ENCODE measurements at regions of chr2 and their contacts with region 1.

Region 1: GRCh38 chr2:64523666-64524603 is at the start of gene AFTPH:
- DNase-seq: peak; percentile 97
- H3K4me3 ChIP-seq: peak within 1 kb of the TSS; percentile 91
- H3K27ac ChIP-seq: peak within 1 kb of the TSS; percentile 81
- H3K27me3 ChIP-seq: peaks cover 12% of the 10 kb centered on the region
- CTCF ChIP-seq: no peak
- polyA plus RNA-seq, gene AFTPH: 16.8 and 22.0 TPM in 2 replicates

Region 2: GRCh38 chr2:64538764-64539433 is 15.0 kb after region 1 on chr2:
- CTCF ChIA-PET with region 1: interaction called, 18 read pairs
- POLR2A ChIA-PET with region 1: interaction called, 3 read pairs
- DNase-seq: no peak
- H3K4me3 ChIP-seq: no peak overlapping the region
- H3K27ac ChIP-seq: no peak overlapping the region
- H3K27me3 ChIP-seq: no peaks in the 10 kb centered on the region
- CTCF ChIP-seq: no peak

Region 3: DNA sequence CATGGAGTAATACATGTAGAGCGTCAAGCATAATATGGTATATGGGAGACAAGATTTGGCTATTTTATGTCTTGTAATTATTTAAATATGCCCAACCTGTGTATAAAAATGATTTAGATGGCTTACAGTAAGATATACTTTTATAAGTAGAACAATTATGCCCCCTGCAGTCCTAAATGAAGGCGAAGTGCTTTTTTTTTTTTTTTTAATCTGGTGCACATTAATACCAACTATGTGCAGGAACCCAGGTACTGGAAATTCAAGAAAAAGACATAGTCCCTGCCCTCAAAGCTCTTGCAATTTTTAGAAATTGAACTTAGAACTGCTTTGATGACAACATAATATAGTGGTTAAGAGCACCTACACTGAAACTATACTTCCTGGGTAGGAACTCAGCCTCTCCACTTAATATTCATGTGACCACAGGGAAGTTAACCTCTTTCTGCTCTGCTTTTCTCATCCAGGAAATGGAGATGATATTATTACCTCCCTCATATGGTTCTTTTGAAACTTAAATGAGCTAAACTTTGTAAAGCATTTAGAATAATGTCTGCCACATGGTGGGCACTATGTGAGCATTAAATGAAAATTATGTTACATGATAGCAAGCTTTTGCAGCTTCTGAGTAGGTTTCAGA is 38.3 kb after region 1 on chr2:
- CTCF ChIA-PET with region 1: interaction called, 63 read pairs
- POLR2A ChIA-PET with region 1: no interaction called
- DNase-seq: no peak
- H3K4me3 ChIP-seq: no peak overlapping the region
- H3K27ac ChIP-seq: no peak overlapping the region
- H3K27me3 ChIP-seq: no peaks in the 10 kb centered on the region
- CTCF ChIP-seq: peak; percentile 50

Region 4: GRCh38 chr2:64873472-64873924 is 349.6 kb after region 1 on chr2:
- CTCF ChIA-PET with region 1: interaction called, 10 read pairs
- POLR2A ChIA-PET with region 1: no interaction called
- DNase-seq: no peak
- H3K4me3 ChIP-seq: 0 out of 2 replicates have a peak overlapping the region, but pooled peaks have one; percentile 10
- H3K27ac ChIP-seq: no peak overlapping the region
- H3K27me3 ChIP-seq: peaks cover 36% of the 10 kb centered on the region
- CTCF ChIP-seq: peak; percentile 92

Measured in AG04450 (cell line).